CD8-positive, alpha-beta T cell (primary cell): ENCODE measurements at regions of chr1 and their contacts with region 1.

Region 1: GRCh38 chr1:8925406-8925805 is 20.3 kb upstream of the CA6 start:
- DNase-seq: no peak
- ATAC-seq: no peak
- H3K4me3 ChIP-seq: peak overlapping the region; percentile 57 to 77
- H3K4me3 Mint-ChIP-seq: no peak overlapping the region
- H3K27ac ChIP-seq: peak overlapping the region; percentile 37 to 78
- H3K27ac Mint-ChIP-seq: no peak overlapping the region
- H3K4me1 ChIP-seq: peaks cover 26% of the 10 kb centered on the region
- H3K4me1 Mint-ChIP-seq: peaks cover 30% of the 10 kb centered on the region
- H3K27me3 ChIP-seq: no peaks in the 10 kb centered on the region
- H3K27me3 Mint-ChIP-seq: no peaks in the 10 kb centered on the region
- CTCF ChIP-seq: no peak

Region 2: GRCh38 chr1:8941906-8942305 is 16.5 kb after region 1 on chr1:
- CTCF ChIA-PET with region 1: no interaction called
- POLR2A ChIA-PET with region 1: interaction called, 5 read pairs
- intact Hi-C with region 1: loop called in 1 of 2 experiments (anchors 2 kb)
- DNase-seq: no peak
- ATAC-seq: no peak
- H3K4me3 ChIP-seq: no peak overlapping the region
- H3K4me3 Mint-ChIP-seq: no peak overlapping the region
- H3K27ac ChIP-seq: no peak overlapping the region
- H3K27ac Mint-ChIP-seq: peak overlapping the region; percentile 69
- H3K4me1 ChIP-seq: peaks cover 98% of the 10 kb centered on the region
- H3K4me1 Mint-ChIP-seq: peaks cover 85% of the 10 kb centered on the region
- H3K27me3 ChIP-seq: no peaks in the 10 kb centered on the region
- H3K27me3 Mint-ChIP-seq: no peaks in the 10 kb centered on the region
- CTCF ChIP-seq: no peak

Region 3: DNA sequence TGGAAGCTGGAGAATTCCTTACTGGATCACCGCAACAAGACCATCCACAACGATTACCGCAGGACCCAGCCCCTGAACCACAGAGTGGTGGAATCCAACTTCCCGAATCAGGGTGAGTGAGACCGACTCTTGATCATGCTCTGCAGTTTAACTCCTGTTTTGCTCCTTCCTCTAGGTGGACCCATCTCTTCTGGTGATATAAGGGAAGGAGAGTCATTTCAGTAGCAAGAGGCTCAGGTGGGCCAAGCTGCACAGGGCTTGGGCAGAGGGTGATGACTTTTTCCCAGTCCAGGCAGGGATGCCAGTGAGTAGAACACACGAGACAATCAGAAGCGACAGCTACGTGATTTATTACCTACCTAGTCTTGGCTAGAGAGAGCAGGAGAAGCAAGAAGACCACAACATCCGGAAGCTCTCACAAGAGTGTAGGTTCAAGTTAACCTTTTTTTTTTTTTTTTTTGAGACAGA is 45.5 kb after region 1 on chr1:
- CTCF ChIA-PET with region 1: interaction called, 9 read pairs
- POLR2A ChIA-PET with region 1: interaction called, 20 read pairs
- intact Hi-C with region 1: loop called (anchors 1 to 2 kb)
- DNase-seq: peak in 7 of 9 experiments; percentile 17 to 82 (median 62)
- ATAC-seq: peak; percentile 79
- H3K4me3 ChIP-seq: peak overlapping the region; percentile 62 to 77
- H3K4me3 Mint-ChIP-seq: peak overlapping the region; percentile 100
- H3K27ac ChIP-seq: peak overlapping the region; percentile 45 to 81
- H3K27ac Mint-ChIP-seq: peak overlapping the region; percentile 100
- H3K4me1 ChIP-seq: peaks cover 22% of the 10 kb centered on the region
- H3K4me1 Mint-ChIP-seq: peaks cover 41% of the 10 kb centered on the region
- H3K27me3 ChIP-seq: peaks cover 0 to 3% of the 10 kb centered on the region in 2 experiments
- H3K27me3 Mint-ChIP-seq: no peaks in the 10 kb centered on the region
- CTCF ChIP-seq: no peak

Region 4: DNA sequence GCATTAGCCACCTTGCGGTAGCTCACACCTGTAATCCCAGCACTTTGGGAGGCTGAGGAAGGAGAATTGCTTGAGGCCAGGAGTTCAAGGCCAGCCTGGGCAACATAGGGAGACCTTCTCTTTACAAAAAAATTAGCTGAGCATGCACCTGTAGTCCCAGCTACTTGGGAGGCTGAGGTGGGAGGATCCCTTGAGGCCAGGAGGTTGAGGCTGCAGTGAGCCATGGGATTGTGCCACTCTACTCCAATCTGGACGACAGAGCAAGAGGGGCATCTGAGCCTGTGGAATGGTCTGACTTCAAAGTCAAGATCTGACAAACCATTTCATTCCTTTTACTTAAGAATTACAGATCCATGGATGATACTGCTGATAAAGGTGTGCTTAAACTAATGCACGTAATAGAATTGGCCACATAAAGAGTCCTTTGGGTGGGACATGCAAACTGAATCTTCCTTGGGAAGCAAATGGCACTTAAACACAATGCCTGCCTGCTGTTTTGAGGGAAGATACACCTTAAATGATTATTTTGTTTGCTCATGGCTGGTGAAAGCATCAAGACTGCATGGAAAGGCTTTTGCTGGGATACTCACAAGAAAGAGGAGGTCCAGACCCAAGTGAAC is 660.9 kb after region 1 on chr1:
- CTCF ChIA-PET with region 1: no interaction called
- POLR2A ChIA-PET with region 1: no interaction called
- intact Hi-C with region 1: no loop called
- DNase-seq: no peak
- ATAC-seq: no peak
- H3K4me3 ChIP-seq: no peak overlapping the region
- H3K4me3 Mint-ChIP-seq: no peak overlapping the region
- H3K27ac ChIP-seq: no peak overlapping the region
- H3K27ac Mint-ChIP-seq: no peak overlapping the region
- H3K4me1 ChIP-seq: peaks cover 16% of the 10 kb centered on the region
- H3K4me1 Mint-ChIP-seq: peaks cover 18% of the 10 kb centered on the region
- H3K27me3 ChIP-seq: no peaks in the 10 kb centered on the region
- H3K27me3 Mint-ChIP-seq: no peaks in the 10 kb centered on the region
- CTCF ChIP-seq: no peak